ENCODE measurements at regions of chr12 and their contacts with region 1.

Region 1: DNA sequence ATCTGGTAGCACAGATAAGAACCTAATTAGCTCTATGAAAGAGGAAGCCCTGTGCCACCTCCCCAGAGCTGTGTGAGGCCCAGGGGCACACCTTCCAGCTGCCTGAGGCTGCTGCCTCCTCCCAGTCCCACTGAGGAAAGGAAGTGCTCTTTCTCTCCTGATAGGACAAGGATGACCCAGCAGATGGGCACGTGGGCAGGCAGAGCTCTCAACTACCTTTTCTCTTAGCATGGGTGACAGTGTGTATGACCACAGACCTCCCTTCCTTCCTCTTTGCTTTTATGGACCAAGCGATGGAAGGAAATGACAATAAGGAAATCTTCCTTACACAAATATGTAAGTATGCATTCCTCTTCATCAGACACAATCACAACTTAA is 127.6 kb upstream of the AMIGO2 start:
- DNase-seq: peak; percentile 79
- ATAC-seq: peak; percentile 66
- H3K4me3 Mint-ChIP-seq: peak overlapping the region; percentile 64
- H3K27ac Mint-ChIP-seq: peak overlapping the region; percentile 92
- H3K4me1 Mint-ChIP-seq: peaks cover 67% of the 10 kb centered on the region
- H3K27me3 Mint-ChIP-seq: no peaks in the 10 kb centered on the region

Region 2: DNA sequence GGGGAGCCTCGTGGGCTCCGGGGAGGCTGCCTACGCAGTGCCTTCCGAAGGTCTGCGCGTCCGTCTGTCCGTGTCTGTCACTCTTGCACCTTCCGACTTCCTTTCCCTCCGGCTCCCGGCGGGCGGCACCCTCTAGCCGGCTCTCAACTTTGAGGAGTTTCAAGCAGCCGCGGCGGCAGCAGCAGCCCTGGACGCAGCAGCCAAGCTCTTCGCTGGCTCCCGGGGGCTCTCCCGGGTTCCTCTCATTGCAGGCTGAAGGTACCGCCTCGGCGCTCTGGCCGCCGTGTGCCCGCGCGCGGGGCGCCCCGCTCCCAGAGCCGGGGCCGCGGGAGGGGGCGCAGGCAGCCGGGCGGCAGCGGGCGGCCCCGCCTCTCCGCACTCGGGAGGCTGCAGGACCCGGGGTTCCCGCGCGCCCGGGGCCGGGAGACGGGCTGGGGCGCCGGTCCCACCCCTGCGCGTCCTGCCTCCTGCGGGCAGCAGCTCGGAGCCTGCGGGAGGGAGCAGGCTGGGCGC is 127.8 kb before region 1 on chr12 and contains the starts of genes AMIGO2 and PCED1B:
- CTCF ChIA-PET with region 1: interaction called, 11 read pairs
- DNase-seq: peak; percentile 84
- ATAC-seq: peak; percentile 62
- H3K4me3 Mint-ChIP-seq: peak within 1 kb of the TSS; percentile 87
- H3K27ac Mint-ChIP-seq: peak within 1 kb of the TSS; percentile 80
- H3K4me1 Mint-ChIP-seq: peaks cover 63% of the 10 kb centered on the region
- H3K27me3 Mint-ChIP-seq: no peaks in the 10 kb centered on the region
- total RNA-seq, gene AMIGO2: 11.6 to 14.2 TPM
- total RNA-seq, gene PCED1B: 44.3 to 63.2 TPM

Region 3: DNA sequence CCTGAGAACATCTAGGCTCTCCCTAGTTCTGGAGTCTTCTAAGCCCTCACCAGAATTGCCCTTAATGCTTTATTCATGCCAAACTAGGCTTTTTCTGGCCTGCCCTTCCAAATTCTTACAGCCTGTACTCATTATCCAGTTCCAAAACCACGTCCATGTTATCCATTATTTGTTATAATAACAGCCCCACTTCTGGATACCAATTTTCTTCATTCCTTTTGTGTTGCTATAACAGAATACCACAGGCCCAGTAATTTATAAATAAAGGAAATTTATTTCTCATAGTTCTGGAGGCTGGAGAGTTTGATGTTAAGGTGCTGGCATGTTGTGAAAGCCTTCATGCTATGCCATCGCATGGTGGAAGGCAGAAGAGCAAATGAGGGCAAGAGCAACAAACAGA is 59.6 kb before region 1 on chr12:
- CTCF ChIA-PET with region 1: no interaction called
- DNase-seq: no peak
- ATAC-seq: no peak
- H3K4me3 Mint-ChIP-seq: no peak overlapping the region
- H3K27ac Mint-ChIP-seq: no peak overlapping the region
- H3K4me1 Mint-ChIP-seq: peaks cover 11% of the 10 kb centered on the region
- H3K27me3 Mint-ChIP-seq: no peaks in the 10 kb centered on the region

Region 4: GRCh38 chr12:47194501-47194900 is 12.8 kb before region 1 on chr12:
- CTCF ChIA-PET with region 1: interaction called, 29 read pairs
- DNase-seq: no peak
- ATAC-seq: no peak
- H3K4me3 Mint-ChIP-seq: no peak overlapping the region
- H3K27ac Mint-ChIP-seq: peak overlapping the region; percentile 88
- H3K4me1 Mint-ChIP-seq: peaks cover 56% of the 10 kb centered on the region
- H3K27me3 Mint-ChIP-seq: no peaks in the 10 kb centered on the region

Region 5: DNA sequence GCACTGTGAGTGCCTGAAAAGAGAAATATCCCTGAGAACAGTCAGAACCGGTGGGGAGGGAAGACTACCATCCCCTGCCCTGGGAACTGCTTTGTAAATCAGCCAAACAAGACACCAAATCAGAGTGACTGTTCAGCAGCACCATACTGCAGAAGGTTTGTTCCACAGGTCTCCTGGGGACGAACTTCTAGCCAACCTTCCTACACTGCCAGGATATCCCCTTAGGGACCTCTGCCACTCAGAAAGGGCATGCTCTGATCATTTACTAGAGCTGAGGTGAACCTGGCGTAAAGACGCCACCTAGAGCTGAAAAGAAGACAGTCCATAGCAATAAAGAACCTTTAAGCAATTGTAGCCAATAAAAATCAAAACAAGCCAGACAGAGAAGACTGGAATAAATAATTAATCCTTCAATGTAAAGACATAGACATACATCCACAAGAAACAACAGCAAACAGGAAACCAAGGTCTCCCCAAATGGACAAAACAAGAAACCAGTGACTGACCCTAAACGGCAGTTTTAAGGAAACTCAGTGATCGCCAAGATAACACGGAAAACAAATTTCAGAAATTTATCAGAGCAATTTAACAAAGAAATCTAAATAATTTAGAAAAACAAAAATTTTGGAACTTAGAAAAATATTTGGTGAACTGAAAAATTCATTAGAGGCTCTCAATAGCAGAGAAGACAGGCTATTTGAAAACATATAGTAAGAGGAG is 100.5 kb after region 1 on chr12:
- CTCF ChIA-PET with region 1: interaction called, 12 read pairs
- DNase-seq: peak; percentile 74
- ATAC-seq: peak; percentile 99
- H3K4me3 Mint-ChIP-seq: peak overlapping the region; percentile 62
- H3K27ac Mint-ChIP-seq: peak overlapping the region; percentile 74
- H3K4me1 Mint-ChIP-seq: peaks cover 33% of the 10 kb centered on the region
- H3K27me3 Mint-ChIP-seq: no peaks in the 10 kb centered on the region

Measured in activated CD8-positive, alpha-beta memory T cell treated with anti-CD3 and anti-CD28 coated beads, Interleukin-2, amount 10 ng/mL, durations not matched to agents 7 days and 5 days (primary cell).